Dorsolateral prefrontal cortex (tissue), 120 donors: ENCODE measurements at regions of chr11 and their contacts with region 1.

Region 1: GRCh38 chr11:1749414-1750312 is 732 bp downstream of the IFITM10 start:
- DNase-seq: peak in 5 of 10 donors; percentile 12 to 68 (median 17)
- H3K4me3 ChIP-seq: peak overlapping the region in 58 of 59 donors; percentile 40 to 72 (median 60)
- H3K27ac ChIP-seq: peak overlapping the region in 54 of 59 donors; percentile 4 to 93 (median 80)
- H3K27me3 ChIP-seq: no peaks in the 10 kb centered on the region
- CTCF ChIP-seq: no peak

Region 2: DNA sequence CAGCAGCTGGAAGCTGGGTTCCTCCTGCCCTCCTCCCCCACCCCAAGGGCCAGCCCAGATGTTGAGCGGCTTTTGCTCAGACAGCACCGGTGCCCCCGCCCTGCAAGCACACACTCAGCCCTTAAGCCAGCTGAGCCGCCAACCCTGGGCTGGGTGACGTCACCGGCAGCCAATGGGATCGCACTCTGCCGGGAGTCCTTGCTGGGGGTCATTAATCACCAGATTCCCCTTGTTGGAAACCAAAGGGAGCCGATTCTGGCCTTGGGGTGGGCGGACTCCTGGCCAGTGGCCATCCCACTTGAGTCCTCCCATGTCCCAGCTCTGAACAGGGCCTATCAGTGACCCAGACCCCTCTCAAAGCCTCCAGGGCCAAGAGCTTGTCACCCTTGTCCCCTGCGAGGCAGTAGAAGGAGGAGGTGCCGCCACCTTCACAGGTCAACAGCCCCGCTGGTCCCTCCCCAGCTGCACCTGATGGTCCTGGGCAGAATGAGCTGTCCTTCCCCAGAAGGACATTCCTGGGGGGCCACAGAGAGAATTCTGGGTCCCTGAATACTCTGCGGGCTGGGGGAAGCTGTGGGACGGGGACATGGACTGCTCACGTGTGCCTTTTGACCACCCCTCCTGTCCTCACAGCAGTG is 185.0 kb before region 1 on chr11:
- intact Hi-C with region 1: loop called in 1 of 2 experiments (anchors 10 kb)
- DNase-seq: peak in 9 of 10 donors; percentile 68 to 93 (median 85)
- H3K4me3 ChIP-seq: peak overlapping the region in 28 of 59 donors; percentile 4 to 49 (median 31)
- H3K27ac ChIP-seq: peak overlapping the region in 56 of 59 donors; percentile 13 to 97 (median 74)
- H3K27me3 ChIP-seq: no peaks in the 10 kb centered on the region
- CTCF ChIP-seq: no peak